ENCODE measurements at regions of chr11 and their contacts with region 1.

Region 1: GRCh38 chr11:44047931-44048431 is at the start of gene ACCSL:
- DNase-seq: no peak
- H3K4me3 ChIP-seq: no peak within 1 kb of the TSS
- H3K27ac ChIP-seq: no peak within 1 kb of the TSS
- H3K4me1 ChIP-seq: no peaks in the 10 kb centered on the region
- H3K27me3 ChIP-seq: no peaks in the 10 kb centered on the region
- CTCF ChIP-seq: no peak
- EP300 ChIP-seq: no peak
- POLR2A ChIP-seq: no peak
- total RNA-seq, gene ACCSL: not detected

Region 2: DNA sequence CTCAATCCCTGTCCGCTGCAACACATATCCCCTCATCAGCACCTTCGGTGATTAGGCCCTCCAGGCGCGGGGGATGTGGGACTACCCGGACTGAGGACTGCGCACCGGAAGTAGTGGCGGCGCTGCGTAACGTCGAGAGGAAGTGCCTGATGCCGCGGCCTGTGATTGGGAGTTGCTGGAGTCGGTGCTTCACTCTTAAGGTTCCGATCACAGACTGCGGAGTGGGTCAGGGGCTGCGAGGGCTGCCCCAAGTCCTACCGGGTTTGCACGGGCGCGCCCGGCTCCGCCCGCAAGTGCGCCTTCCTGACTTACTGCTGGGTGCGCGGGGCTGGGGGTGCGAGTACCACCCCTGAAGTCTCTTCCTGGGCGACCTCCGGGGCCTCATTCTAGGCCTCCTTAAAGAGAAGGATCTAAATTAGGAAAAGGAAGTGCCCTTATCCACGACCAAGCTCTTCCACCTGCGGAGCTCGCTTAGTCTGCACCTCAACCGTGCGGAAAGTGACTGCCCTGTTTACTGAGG is 167.3 kb before region 1 on chr11 and contains the start of gene ALKBH3:
- in situ Hi-C with region 1: loop called in 2 of 4 experiments (anchors 10 kb)
- intact Hi-C with region 1: no loop called
- DNase-seq: peak; percentile 93
- H3K4me3 ChIP-seq: peak within 1 kb of the TSS; percentile 71 to 90 (median 80)
- H3K27ac ChIP-seq: peak within 1 kb of the TSS; percentile 62 to 84 (median 78)
- H3K4me1 ChIP-seq: peaks cover 10 to 17% (median 15%) of the 10 kb centered on the region in 4 donors
- H3K27me3 ChIP-seq: peaks cover 32% of the 10 kb centered on the region
- CTCF ChIP-seq: peak in 2 of 5 experiments; percentile 5 to 37
- EP300 ChIP-seq: no peak
- POLR2A ChIP-seq: peak; percentile 29
- total RNA-seq, gene ALKBH3: 7.2 to 27.6 (median 23.5) TPM

Region 3: DNA sequence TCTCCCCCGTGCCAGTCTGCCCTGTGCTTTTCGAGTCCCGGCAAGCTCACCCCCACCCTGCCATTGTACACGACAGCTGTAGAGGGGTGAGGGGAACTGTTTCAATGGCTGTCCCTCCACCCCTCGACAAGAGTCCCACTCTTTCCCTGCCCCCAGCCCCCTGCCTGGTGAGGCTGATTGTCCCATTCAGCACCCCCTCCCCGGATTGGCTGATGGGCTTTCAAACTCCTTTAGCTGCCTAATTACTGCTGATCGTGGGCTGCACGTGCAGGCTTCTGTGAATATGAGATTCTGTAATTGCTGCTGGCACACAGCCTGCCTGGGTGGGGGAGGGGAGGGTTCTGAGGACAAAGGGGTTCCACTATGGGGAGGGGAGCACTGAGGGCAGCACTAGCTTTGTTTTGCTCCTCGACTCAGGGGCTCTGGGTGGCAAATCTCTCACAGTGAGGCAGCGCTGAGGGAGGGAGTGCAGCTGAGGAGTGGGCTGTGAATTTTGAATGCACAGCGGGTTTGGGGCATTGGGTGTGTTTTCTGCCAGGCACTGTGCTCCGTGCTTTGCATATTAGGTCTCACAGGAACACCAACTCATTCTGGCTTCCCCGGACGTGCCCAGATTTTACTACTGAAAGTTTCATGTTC is 42.8 kb before region 1 on chr11:
- in situ Hi-C with region 1: no loop called
- intact Hi-C with region 1: no loop called
- DNase-seq: no peak
- H3K4me3 ChIP-seq: no peak overlapping the region
- H3K27ac ChIP-seq: no peak overlapping the region
- H3K4me1 ChIP-seq: no peaks in the 10 kb centered on the region
- H3K27me3 ChIP-seq: no peaks in the 10 kb centered on the region
- CTCF ChIP-seq: no peak
- EP300 ChIP-seq: no peak
- POLR2A ChIP-seq: no peak